ENCODE measurements at regions of chr15 and their contacts with region 1.

Region 1: GRCh38 chr15:64959128-64959527 is 30.6 kb downstream of the SPG21 start:
- DNase-seq: no peak
- H3K4me3 ChIP-seq: no peak overlapping the region
- H3K27ac ChIP-seq: no peak overlapping the region
- H3K4me1 ChIP-seq: no peaks in the 10 kb centered on the region
- H3K27me3 ChIP-seq: no peaks in the 10 kb centered on the region
- CTCF ChIP-seq: no peak

Region 2: GRCh38 chr15:64740311-64741170 is 218.6 kb before region 1 on chr15:
- CTCF ChIA-PET with region 1: no interaction called
- dilution Hi-C with region 1: no loop called
- in situ Hi-C with region 1: no loop called
- intact Hi-C with region 1: no loop called
- DNase-seq: peak; percentile 50
- H3K4me3 ChIP-seq: no peak overlapping the region
- H3K27ac ChIP-seq: no peak overlapping the region
- H3K4me1 ChIP-seq: no peaks in the 10 kb centered on the region
- H3K27me3 ChIP-seq: no peaks in the 10 kb centered on the region
- CTCF ChIP-seq: peak in 1 of 2 donors; percentile 31

Region 3: GRCh38 chr15:64921711-64922110 is 37.4 kb before region 1 on chr15:
- CTCF ChIA-PET with region 1: no interaction called
- dilution Hi-C with region 1: loop called (anchors 5 kb)
- in situ Hi-C with region 1: no loop called
- intact Hi-C with region 1: no loop called
- DNase-seq: peak; percentile 9
- H3K4me3 ChIP-seq: no peak overlapping the region
- H3K27ac ChIP-seq: no peak overlapping the region
- H3K4me1 ChIP-seq: no peaks in the 10 kb centered on the region
- H3K27me3 ChIP-seq: no peaks in the 10 kb centered on the region
- CTCF ChIP-seq: no peak